Kidney (tissue), 22 donors: ENCODE measurements at regions of chr20 and their contacts with region 1.

Region 1: GRCh38 chr20:44074252-44075151 is 112.5 kb downstream of the JPH2 start:
- DNase-seq: peak in 2 of 5 donors; percentile 48 to 58
- H3K4me3 ChIP-seq: no peak overlapping the region
- H3K27ac ChIP-seq: no peak overlapping the region
- H3K4me1 ChIP-seq: no peaks in the 10 kb centered on the region
- H3K27me3 ChIP-seq: no peaks in the 10 kb centered on the region
- CTCF ChIP-seq: no peak

Region 2: GRCh38 chr20:43749734-43750294 is 324.7 kb before region 1 on chr20:
- intact Hi-C with region 1: loop called (anchors 5 kb)
- DNase-seq: peak; percentile 50 to 87 (median 73)
- H3K4me3 ChIP-seq: no peak overlapping the region
- H3K27ac ChIP-seq: no peak overlapping the region
- H3K4me1 ChIP-seq: no peaks in the 10 kb centered on the region
- H3K27me3 ChIP-seq: no peaks in the 10 kb centered on the region
- CTCF ChIP-seq: peak; percentile 92

Region 3: DNA sequence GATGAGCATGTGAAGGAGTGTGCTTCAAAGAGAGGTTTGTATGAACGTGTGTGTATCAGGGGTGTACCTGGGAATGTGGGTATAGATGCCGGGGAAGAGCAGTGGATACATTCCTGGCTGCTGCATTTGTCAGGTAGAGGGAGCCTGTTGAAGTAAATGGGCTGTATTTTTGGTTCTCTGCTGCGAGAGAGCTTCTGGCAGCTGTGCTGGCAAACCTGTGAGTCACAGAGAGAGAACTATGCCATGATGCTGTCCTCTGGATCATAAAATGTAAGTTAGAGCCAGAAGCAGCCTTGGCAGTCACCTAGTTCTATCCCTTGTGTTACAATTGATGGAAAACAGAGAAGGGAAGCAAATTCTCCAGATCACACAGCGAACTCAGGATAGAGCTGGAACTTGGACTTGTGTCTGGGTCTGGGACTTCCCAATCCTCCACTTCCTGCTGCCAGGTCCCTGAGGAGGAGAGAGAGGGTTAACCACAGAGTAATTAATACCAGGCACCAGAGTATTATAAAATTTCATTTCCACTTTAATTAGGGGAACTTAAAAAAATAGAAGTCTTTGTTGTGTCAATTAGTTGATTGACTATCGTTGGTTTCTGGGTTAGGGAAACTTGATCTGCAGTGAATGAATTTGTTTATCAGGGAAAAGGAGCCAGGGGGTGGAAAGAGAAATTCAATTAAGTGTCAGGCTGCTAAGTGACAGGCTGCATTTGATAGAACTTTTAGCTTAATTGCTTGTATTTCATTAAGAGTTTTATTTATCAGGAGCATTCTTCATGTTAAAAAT is 306.6 kb before region 1 on chr20:
- intact Hi-C with region 1: no loop called
- DNase-seq: no peak
- H3K4me3 ChIP-seq: no peak overlapping the region
- H3K27ac ChIP-seq: no peak overlapping the region
- H3K4me1 ChIP-seq: no peaks in the 10 kb centered on the region
- H3K27me3 ChIP-seq: no peaks in the 10 kb centered on the region
- CTCF ChIP-seq: no peak